PC-9 (cell line): ENCODE measurements at regions of chr2 and their contacts with region 1.

Region 1: DNA sequence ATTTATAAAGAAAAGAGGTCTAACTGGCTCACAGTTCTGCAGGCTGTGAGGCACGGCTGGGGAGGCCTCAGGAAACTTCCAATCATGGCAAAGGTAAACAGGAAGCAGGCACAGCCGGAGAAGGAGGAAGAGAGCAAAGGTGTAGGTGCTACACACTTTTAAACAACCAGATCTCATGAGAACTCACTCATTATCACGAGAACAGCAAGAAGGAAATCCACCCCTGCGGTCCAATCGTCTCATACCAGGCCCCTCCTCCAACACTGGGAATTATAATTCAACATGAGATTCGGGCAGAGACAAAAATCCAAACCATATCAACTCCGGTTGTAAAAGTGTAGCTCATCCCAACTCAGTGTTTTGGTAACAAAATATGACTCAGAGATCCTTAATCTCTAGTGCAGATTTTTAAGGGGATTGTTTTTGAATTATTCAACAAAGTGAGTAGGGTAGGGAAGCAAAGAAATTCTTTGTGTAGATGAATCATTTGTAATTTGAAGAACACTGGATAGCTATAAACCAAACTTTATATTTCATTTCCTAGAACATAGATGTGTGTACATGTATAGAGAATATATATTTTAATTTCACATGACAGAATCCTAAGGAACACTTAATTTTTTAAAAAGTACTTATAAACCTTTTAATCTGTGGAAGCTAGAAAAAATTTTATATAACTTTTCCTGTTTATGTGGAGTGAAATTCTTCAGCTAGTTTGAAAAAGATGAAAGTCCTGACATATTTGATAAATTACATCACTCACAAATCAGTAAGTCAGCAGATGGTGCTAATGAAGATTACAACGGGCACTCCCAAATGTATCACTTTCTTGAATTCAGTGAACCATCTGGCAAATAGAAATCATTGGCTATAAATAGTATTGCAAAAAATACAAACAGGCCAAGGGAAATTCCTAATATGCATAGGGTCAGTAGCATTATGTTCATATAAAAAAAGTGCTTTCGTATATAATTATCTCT is 130.1 kb downstream of the OLA1 start:
- DNase-seq: peak; percentile 41 to 83
- H3K4me3 ChIP-seq: 0 out of 2 replicates have a peak overlapping the region, but pooled peaks have one; percentile 1
- H3K27ac ChIP-seq: peak overlapping the region; percentile 66
- H3K4me1 ChIP-seq: peaks cover 62% of the 10 kb centered on the region
- H3K27me3 ChIP-seq: no peaks in the 10 kb centered on the region
- CTCF ChIP-seq: no peak

Region 2: GRCh38 chr2:173346035-173346434 is 772.2 kb before region 1 on chr2:
- CTCF ChIA-PET with region 1: no interaction called
- POLR2A ChIA-PET with region 1: no interaction called
- intact Hi-C with region 1: no loop called
- DNase-seq: no peak
- H3K4me3 ChIP-seq: no peak overlapping the region
- H3K27ac ChIP-seq: no peak overlapping the region
- H3K4me1 ChIP-seq: no peaks in the 10 kb centered on the region
- H3K27me3 ChIP-seq: no peaks in the 10 kb centered on the region
- CTCF ChIP-seq: no peak

Region 3: DNA sequence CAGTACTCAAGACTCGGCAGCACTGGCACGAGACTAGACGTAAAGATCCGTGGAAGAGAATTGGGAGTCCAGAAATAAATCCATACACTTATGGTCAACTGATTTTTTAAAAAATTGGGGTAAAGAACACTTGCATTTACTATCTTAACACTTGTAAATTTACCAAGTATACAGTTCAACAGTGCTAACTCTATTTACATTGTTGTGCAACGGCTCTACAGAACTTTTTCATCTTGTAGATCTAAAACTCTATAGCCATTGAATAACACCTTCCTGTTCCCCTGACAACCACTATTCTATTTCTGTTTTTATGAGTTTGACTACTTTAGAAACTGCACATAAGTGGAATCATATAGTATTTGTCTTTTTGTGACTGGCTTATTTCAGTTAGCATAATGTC is 23.7 kb before region 1 on chr2:
- CTCF ChIA-PET with region 1: interaction called, 10 read pairs
- POLR2A ChIA-PET with region 1: no interaction called
- intact Hi-C with region 1: no loop called
- DNase-seq: no peak
- H3K4me3 ChIP-seq: no peak overlapping the region
- H3K27ac ChIP-seq: no peak overlapping the region
- H3K4me1 ChIP-seq: no peaks in the 10 kb centered on the region
- H3K27me3 ChIP-seq: no peaks in the 10 kb centered on the region
- CTCF ChIP-seq: no peak